Activated T-helper 1 cell treated with anti-CD3 and anti-CD28 coated beads, Interleukin-12 subunit alpha, Interleukin-12 subunit beta, Interleukin-2, Interleukin-4 antibody, amounts not matched to agents 30 ng/mL and 10 ng/mL and 1 ng/mL, durations not matched to agents 14 hours and 24 hours and 36 hours (primary cell): ENCODE measurements at regions of chr15 and their contacts with region 1.

Region 1: DNA sequence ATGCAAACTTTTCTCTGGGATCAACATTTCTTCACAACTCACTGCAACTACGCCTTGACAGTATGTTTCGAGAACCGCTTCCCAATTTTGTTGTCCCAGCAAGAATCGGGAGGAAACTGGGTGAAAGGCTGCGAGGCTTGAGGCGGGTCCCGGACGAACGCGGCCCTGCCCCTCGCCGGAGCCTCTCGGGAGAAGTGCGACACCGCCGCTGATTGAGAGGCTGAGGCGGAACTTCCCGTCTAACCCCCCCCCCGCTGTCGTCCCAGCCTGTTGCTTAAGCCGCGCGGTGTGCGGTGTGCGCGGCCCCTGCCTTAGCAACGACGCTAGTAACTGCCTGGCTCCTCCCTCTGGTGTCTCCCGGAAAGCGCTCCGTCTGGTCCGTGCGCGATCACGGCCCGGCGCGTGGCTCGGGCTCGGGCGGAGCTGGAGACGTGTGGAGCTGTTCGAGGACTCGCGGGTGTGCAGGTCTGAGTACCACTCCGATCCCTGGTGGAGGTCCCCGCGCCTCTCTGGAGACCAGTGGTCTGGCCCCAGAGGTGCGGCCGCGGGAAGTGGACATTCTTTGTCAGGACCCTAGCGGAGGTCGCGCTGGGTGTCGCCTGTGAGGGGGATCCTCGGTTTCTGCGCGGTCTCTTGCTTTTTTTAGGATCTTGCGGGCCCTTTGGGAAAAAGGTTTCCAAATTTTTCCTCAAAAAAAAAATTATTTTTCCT is at the starts of genes DTWD1 and FAM227B:
- DNase-seq: peak; percentile 93
- H3K4me3 Mint-ChIP-seq: peak within 1 kb of the TSS; percentile 85
- H3K27ac Mint-ChIP-seq: peak within 1 kb of the TSS; percentile 88
- H3K4me1 Mint-ChIP-seq: peaks cover 40% of the 10 kb centered on the region
- H3K27me3 Mint-ChIP-seq: no peaks in the 10 kb centered on the region
- total RNA-seq, gene DTWD1: 21.1 and 26.5 TPM in 2 replicates
- total RNA-seq, gene FAM227B: 2.3 and 2.9 TPM in 2 replicates

Region 2: DNA sequence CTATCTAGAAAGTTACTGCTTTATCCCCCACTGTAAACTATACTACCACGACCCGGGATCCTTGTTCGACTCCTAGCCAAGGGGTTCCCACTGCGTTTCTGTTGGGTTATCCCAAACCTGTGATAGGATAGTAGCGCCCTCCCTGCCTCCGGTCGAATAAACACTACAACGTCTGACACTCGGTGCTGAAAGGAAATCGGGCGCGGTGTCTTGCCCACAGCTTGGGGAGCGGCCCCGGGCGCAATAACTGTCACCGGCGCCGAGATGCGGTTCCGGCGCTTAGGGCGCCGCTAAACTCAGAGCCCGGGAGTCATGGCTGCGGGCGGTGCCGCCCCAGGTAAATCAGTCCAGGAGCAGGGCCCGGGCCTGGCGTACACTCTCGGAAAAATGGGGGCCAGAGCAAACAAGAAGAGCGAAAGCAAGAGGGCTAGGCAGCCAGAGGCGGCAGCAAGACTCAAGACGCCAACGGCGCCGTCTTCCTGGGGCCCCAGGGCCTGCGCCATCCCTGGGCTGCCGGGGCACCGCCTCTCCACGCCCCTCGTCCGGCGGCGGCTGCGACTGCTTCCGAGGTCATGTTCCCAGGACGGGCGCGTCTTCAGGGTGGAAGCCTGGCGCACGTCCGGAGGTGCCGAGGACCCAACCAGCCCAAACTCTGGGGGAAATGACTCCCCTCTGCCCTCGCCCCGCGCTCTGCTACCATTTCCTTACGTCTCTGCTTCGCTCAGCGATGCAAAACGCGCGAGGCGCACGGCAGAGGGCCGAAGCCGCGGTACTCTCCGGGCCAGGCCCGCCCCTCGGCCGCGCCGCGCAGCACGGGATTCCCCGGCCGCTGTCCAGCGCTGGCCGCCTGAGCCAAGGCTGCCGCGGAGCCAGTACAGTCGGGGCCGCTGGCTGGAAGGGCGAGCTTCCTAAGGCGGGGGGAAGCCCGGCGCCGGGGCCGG is 1289.7 kb before region 1 on chr15 and contains the start of gene DUT:
- intact Hi-C with region 1: loop called (anchors 2 kb)
- DNase-seq: peak; percentile 81
- H3K4me3 Mint-ChIP-seq: peak within 1 kb of the TSS; percentile 100
- H3K27ac Mint-ChIP-seq: peak within 1 kb of the TSS; percentile 99
- H3K4me1 Mint-ChIP-seq: peaks cover 46% of the 10 kb centered on the region
- H3K27me3 Mint-ChIP-seq: no peaks in the 10 kb centered on the region
- total RNA-seq, gene DUT: 244 and 252 TPM in 2 replicates

Region 3: GRCh38 chr15:48963524-48964113 is 657.2 kb before region 1 on chr15 and contains the start of gene SHC4:
- intact Hi-C with region 1: loop called (anchors 10 kb)
- DNase-seq: no peak
- H3K4me3 Mint-ChIP-seq: peak within 1 kb of the TSS; percentile 84
- H3K27ac Mint-ChIP-seq: peak within 1 kb of the TSS; percentile 82
- H3K4me1 Mint-ChIP-seq: peaks cover 64% of the 10 kb centered on the region
- H3K27me3 Mint-ChIP-seq: peaks cover 11% of the 10 kb centered on the region
- total RNA-seq, gene SHC4: 25.7 and 26.4 TPM in 2 replicates

Region 4: GRCh38 chr15:49235446-49236124 is 385.2 kb before region 1 on chr15:
- intact Hi-C with region 1: loop called (anchors 5 kb)
- DNase-seq: peak; percentile 30
- H3K4me3 Mint-ChIP-seq: no peak overlapping the region
- H3K27ac Mint-ChIP-seq: peak overlapping the region; percentile 11
- H3K4me1 Mint-ChIP-seq: peaks cover 12% of the 10 kb centered on the region
- H3K27me3 Mint-ChIP-seq: no peaks in the 10 kb centered on the region

Region 5: DNA sequence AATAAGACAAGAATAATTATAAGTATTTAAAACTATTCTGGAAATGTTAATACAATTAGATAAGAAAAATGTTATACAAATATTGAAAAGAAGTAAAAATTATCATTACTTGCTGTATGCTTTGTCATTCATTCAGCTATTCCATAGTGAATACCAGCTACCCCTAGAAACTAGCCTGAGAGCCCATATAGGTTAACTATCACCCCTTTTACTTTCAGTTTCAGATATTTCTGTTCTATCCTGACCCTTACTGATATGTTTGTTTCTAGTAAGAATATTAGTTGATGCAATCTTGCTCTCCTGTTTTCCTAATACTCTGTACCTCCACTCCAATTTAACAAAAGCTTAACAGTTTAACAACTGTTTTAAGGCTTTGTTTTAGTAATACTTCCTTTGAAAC is 31.8 kb before region 1 on chr15:
- intact Hi-C with region 1: no loop called
- DNase-seq: no peak
- H3K4me3 Mint-ChIP-seq: no peak overlapping the region
- H3K27ac Mint-ChIP-seq: no peak overlapping the region
- H3K4me1 Mint-ChIP-seq: peaks cover 5% of the 10 kb centered on the region
- H3K27me3 Mint-ChIP-seq: no peaks in the 10 kb centered on the region

Region 6: GRCh38 chr15:50066192-50066591 is 445.4 kb after region 1 on chr15:
- intact Hi-C with region 1: loop called (anchors 5 kb)
- DNase-seq: peak; percentile 44
- H3K4me3 Mint-ChIP-seq: peak overlapping the region; percentile 45
- H3K27ac Mint-ChIP-seq: peak overlapping the region; percentile 92
- H3K4me1 Mint-ChIP-seq: peaks cover 62% of the 10 kb centered on the region
- H3K27me3 Mint-ChIP-seq: no peaks in the 10 kb centered on the region

Region 7: GRCh38 chr15:50354838-50355618 is 734.2 kb after region 1 on chr15 and contains the start of gene GABPB1:
- intact Hi-C with region 1: loop called (anchors 5 kb)
- DNase-seq: peak; percentile 87
- H3K4me3 Mint-ChIP-seq: peak within 1 kb of the TSS; percentile 100
- H3K27ac Mint-ChIP-seq: peak within 1 kb of the TSS; percentile 100
- H3K4me1 Mint-ChIP-seq: peaks cover 48% of the 10 kb centered on the region
- H3K27me3 Mint-ChIP-seq: no peaks in the 10 kb centered on the region
- total RNA-seq, gene GABPB1: 80.7 and 81.0 TPM in 2 replicates